ENCODE measurements at regions of chr13 and their contacts with region 1.

Region 1: GRCh38 chr13:30685320-30685859 is 50.0 kb upstream of the ALOX5AP start:
- DNase-seq: no peak
- H3K4me3 ChIP-seq: no peak overlapping the region
- H3K27ac ChIP-seq: no peak overlapping the region
- H3K4me1 ChIP-seq: peaks cover 0 to 6% (median 0%) of the 10 kb centered on the region in 4 donors
- H3K27me3 ChIP-seq: no peaks in the 10 kb centered on the region
- CTCF ChIP-seq: no peak

Region 2: GRCh38 chr13:30593001-30593400 is 92.4 kb before region 1 on chr13:
- intact Hi-C with region 1: no loop called
- DNase-seq: no peak
- H3K4me3 ChIP-seq: no peak overlapping the region
- H3K27ac ChIP-seq: no peak overlapping the region
- H3K4me1 ChIP-seq: no peaks in the 10 kb centered on the region
- H3K27me3 ChIP-seq: no peaks in the 10 kb centered on the region
- CTCF ChIP-seq: no peak

Region 3: GRCh38 chr13:30730526-30730925 is 45.1 kb after region 1 on chr13:
- intact Hi-C with region 1: loop called (anchors 5 kb)
- DNase-seq: no peak
- H3K4me3 ChIP-seq: no peak overlapping the region
- H3K27ac ChIP-seq: peak overlapping the region; percentile 59 to 63
- H3K4me1 ChIP-seq: peaks cover 0 to 42% (median 12%) of the 10 kb centered on the region in 4 donors
- H3K27me3 ChIP-seq: no peaks in the 10 kb centered on the region
- CTCF ChIP-seq: no peak

Region 4: GRCh38 chr13:30963791-30964190 is 278.4 kb after region 1 on chr13:
- intact Hi-C with region 1: no loop called
- DNase-seq: no peak
- H3K4me3 ChIP-seq: no peak overlapping the region
- H3K27ac ChIP-seq: no peak overlapping the region
- H3K4me1 ChIP-seq: peaks cover 0 to under 1% (median 0%) of the 10 kb centered on the region in 4 donors
- H3K27me3 ChIP-seq: peaks cover 0 to 4% of the 10 kb centered on the region in 2 donors
- CTCF ChIP-seq: no peak